Activated T-helper 1 cell treated with anti-CD3 and anti-CD28 coated beads, Interleukin-12 subunit alpha, Interleukin-12 subunit beta, Interleukin-2, Interleukin-4 antibody, amounts not matched to agents 30 ng/mL and 10 ng/mL and 1 ng/mL, durations not matched to agents 14 hours and 24 hours and 36 hours (primary cell): ENCODE measurements at regions of chr21 and their contacts with region 1.

Region 1: GRCh38 chr21:44011980-44012527 is at the start of gene TRAPPC10:
- DNase-seq: peak; percentile 85
- H3K4me3 Mint-ChIP-seq: peak within 1 kb of the TSS; percentile 91
- H3K27ac Mint-ChIP-seq: peak within 1 kb of the TSS; percentile 94
- H3K4me1 Mint-ChIP-seq: peaks cover 47% of the 10 kb centered on the region
- H3K27me3 Mint-ChIP-seq: no peaks in the 10 kb centered on the region
- total RNA-seq, gene TRAPPC10: 85.5 and 95.3 TPM in 2 replicates

Region 2: DNA sequence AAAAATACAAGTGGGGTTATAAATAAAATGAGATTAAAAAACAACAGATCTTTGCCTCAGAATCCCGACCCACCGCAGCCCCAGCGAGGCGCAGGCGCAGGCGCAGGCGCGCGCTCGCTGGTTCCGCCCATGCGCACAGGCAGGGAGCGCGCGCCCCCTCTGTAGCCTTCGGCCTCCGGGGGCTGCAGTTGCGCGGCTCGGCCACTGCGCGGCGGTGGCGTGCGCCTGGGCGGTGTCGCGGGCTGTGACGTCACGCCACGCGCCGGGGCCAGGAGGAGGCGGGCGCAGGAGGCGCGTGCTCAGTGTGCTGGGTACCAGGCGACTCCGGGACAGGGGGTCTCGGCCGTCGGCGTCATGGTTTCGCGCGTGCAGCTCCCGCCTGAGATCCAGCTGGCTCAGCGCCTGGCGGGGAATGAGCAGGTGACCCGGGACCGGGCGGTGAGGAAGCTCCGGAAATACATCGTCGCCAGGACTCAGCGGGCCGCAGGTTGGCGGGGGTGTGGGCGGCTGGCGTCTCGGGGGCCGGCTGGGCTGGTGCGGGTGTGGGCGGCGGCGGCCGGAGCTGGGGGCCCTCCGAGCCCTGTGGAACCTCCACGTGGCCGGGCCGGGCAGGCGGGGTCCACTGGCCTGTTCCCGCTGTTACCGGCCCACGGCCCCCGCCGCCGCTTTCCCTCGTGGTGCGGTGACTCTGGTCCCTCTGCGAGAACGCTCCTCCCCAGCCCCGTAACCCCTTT is 222.6 kb before region 1 on chr21 and contains the start of gene RRP1:
- intact Hi-C with region 1: loop called (anchors 5 kb)
- DNase-seq: peak; percentile 94
- H3K4me3 Mint-ChIP-seq: peak within 1 kb of the TSS; percentile 95
- H3K27ac Mint-ChIP-seq: peak within 1 kb of the TSS; percentile 94
- H3K4me1 Mint-ChIP-seq: peaks cover 23% of the 10 kb centered on the region
- H3K27me3 Mint-ChIP-seq: no peaks in the 10 kb centered on the region
- total RNA-seq, gene RRP1: 90.9 and 91.8 TPM in 2 replicates

Region 3: GRCh38 chr21:44039828-44040227 is 27.8 kb after region 1 on chr21:
- intact Hi-C with region 1: no loop called
- DNase-seq: no peak
- H3K4me3 Mint-ChIP-seq: no peak overlapping the region
- H3K27ac Mint-ChIP-seq: no peak overlapping the region
- H3K4me1 Mint-ChIP-seq: peaks cover 24% of the 10 kb centered on the region
- H3K27me3 Mint-ChIP-seq: no peaks in the 10 kb centered on the region

Region 4: DNA sequence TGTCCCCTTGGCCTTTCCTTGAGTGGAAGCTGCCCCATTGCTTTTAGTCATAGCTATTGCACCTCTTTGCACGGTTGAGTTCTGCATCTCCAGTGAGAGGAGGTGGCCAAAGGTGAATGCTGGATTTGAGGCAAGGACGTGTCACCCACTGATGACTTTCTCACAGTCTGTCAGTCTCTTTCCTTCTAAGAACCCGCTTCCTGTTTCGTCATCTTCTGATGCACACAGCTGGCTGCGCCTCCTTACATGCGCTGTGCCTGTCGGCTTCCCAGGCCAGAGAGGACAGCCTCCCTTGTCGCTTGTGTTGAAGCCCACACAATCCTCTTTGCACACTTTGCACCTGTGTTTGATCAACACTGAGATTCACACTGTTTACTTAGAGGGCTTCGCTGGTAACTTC is 53.4 kb after region 1 on chr21:
- intact Hi-C with region 1: loop called (anchors 1 kb)
- DNase-seq: peak; percentile 78
- H3K4me3 Mint-ChIP-seq: peak overlapping the region; percentile 71
- H3K27ac Mint-ChIP-seq: peak overlapping the region; percentile 94
- H3K4me1 Mint-ChIP-seq: peaks cover 51% of the 10 kb centered on the region
- H3K27me3 Mint-ChIP-seq: no peaks in the 10 kb centered on the region

Region 5: DNA sequence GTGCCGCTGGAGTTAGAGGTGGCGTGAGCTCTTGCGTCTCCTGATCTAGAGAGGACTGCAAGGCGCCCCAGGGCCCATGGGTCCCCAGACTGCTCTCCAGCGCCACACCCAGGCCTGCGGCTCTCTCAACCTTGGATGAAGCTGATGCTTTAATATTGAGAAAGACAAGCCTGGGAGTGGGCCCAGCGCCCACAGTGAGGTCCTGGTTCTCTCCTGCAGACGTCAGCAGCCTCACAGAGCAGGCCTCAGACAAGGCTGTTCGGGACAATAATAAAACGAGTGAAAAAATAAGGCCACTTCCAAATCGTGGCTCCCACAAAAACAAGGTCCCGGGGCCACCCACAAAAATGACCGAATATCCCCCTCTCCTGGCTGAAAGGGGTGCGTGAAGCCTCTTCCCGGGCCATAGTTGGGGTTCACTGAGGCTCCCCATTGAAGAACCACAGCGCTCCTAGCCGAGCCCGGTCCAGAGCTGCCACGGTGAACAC is 255.6 kb after region 1 on chr21:
- intact Hi-C with region 1: no loop called
- DNase-seq: no peak
- H3K4me3 Mint-ChIP-seq: no peak overlapping the region
- H3K27ac Mint-ChIP-seq: no peak overlapping the region
- H3K4me1 Mint-ChIP-seq: no peaks in the 10 kb centered on the region
- H3K27me3 Mint-ChIP-seq: no peaks in the 10 kb centered on the region

Region 6: DNA sequence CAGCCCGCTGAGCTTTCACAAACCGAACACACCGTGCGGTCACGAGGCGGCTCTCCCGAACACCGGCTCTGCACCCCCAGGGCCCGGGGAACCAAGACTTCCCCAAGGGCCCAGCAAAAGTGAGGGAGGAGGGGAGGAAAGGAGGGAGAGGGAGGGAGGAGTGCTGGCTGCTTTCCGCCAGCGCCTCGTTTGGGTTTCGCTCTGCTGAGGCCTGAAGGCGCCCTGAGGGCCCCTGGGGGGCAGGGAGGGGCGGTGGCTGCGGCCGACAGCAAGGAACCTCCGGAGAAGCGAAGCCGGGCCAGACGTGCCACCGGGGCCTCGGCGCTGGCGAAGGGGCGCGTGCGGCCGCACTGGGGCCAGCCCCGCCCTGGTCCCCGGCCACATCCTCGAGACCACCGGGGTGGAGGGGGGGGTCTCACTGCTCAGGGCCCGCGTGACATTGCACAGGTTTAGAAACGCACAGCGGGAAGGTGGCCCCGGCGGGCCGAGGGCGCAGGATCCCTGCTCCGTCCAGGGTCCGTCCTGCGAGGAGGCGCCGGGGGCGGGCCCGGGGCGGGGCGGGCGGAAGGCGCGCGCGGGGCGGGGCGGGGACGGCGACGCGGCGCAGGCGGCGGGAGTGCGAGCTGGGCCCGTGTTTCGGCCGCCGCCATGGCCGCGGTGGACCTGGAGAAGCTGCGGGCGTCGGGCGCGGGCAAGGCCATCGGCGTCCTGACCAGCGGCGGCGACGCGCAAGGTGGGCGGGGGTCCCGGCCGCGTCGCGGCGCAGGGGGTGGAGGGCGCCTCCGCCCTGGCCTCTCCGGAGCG is 287.6 kb after region 1 on chr21 and contains the start of gene PFKL:
- intact Hi-C with region 1: loop called (anchors 1 kb)
- DNase-seq: peak; percentile 60
- H3K4me3 Mint-ChIP-seq: peak within 1 kb of the TSS; percentile 86
- H3K27ac Mint-ChIP-seq: peak within 1 kb of the TSS; percentile 91
- H3K4me1 Mint-ChIP-seq: peaks cover 39% of the 10 kb centered on the region
- H3K27me3 Mint-ChIP-seq: no peaks in the 10 kb centered on the region
- total RNA-seq, gene PFKL: 132 and 139 TPM in 2 replicates